Heart right ventricle (tissue), 16 donors: ENCODE measurements at regions of chr9 and their contacts with region 1.

Region 1: GRCh38 chr9:129413537-129414376 is 207.1 kb downstream of the C9orf50 start:
- DNase-seq: peak; percentile 99 to 100
- ATAC-seq: peak; percentile 85 to 92 (median 88)
- H3K4me3 ChIP-seq: peak overlapping the region; percentile 47 to 74 (median 61)
- H3K27ac ChIP-seq: peak overlapping the region; percentile 97 to 100 (median 100)
- H3K4me1 ChIP-seq: peaks cover 18 to 53% (median 31%) of the 10 kb centered on the region in 9 donors
- H3K27me3 ChIP-seq: no peaks in the 10 kb centered on the region
- CTCF ChIP-seq: no peak

Region 2: GRCh38 chr9:129164246-129164930 is 249.4 kb before region 1 on chr9:
- intact Hi-C with region 1: no loop called
- DNase-seq: peak; percentile 28 to 50
- ATAC-seq: peak; percentile 18 to 73 (median 48)
- H3K4me3 ChIP-seq: no peak overlapping the region
- H3K27ac ChIP-seq: peak overlapping the region; percentile 14 to 87 (median 72)
- H3K4me1 ChIP-seq: peaks cover 11 to 48% (median 24%) of the 10 kb centered on the region in 9 donors
- H3K27me3 ChIP-seq: no peaks in the 10 kb centered on the region
- CTCF ChIP-seq: no peak

Region 3: GRCh38 chr9:129312251-129313122 is 101.3 kb before region 1 on chr9:
- intact Hi-C with region 1: no loop called
- DNase-seq: no peak
- ATAC-seq: no peak
- H3K4me3 ChIP-seq: no peak overlapping the region
- H3K27ac ChIP-seq: no peak overlapping the region
- H3K4me1 ChIP-seq: peaks cover 0 to 28% (median 11%) of the 10 kb centered on the region in 9 donors
- H3K27me3 ChIP-seq: no peaks in the 10 kb centered on the region
- CTCF ChIP-seq: no peak

Region 4: DNA sequence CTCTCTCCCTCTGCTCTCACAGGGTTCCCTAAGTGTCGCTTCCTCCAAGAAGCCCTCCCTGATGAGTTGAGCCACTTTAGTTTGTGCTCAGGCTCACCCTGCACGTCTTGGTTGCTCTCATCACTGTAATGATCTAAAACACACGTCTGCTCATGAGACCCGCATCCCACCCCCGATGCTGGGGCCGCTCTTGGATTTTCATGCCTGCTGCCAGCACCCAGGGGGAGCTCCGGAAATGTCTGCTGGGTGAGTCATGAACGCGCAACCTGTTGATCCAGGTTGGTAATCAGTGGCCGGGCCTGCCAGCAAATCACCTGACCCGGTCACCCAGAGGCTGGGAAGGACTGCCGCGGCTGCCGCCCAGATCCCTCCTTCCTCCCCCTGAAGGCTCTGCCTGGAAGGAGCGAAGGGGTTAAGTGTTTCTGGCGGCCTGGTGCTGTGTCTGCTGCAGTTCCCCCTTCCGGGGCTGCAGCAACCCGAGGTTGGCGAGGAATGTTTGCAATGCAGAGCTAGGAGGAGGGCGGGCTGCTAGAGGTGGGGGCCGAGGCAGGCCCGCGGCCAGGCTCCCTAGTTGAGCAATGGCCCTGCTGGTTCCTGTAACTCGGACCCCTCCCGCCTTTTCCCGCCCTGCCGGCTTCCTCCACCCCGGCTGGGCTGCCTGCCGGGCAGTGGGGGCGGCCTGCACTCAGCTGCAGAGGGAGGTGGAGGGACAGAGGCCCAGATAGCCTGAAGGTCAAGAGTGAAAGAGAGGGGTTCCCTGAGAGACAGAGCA is 79.6 kb before region 1 on chr9:
- intact Hi-C with region 1: loop called in 2 of 10 experiments (anchors 5 to 10 kb)
- DNase-seq: peak; percentile 88 to 89
- ATAC-seq: peak; percentile 87 to 95 (median 91)
- H3K4me3 ChIP-seq: peak overlapping the region in 8 of 10 donors; percentile 2 to 39 (median 29)
- H3K27ac ChIP-seq: peak overlapping the region; percentile 69 to 96 (median 88)
- H3K4me1 ChIP-seq: peaks cover 19 to 60% (median 53%) of the 10 kb centered on the region in 9 donors
- H3K27me3 ChIP-seq: no peaks in the 10 kb centered on the region
- CTCF ChIP-seq: peak in 4 of 9 donors; percentile 7 to 22 (median 11)

Region 5: GRCh38 chr9:129460323-129461261 is 46.8 kb after region 1 on chr9:
- intact Hi-C with region 1: loop called in 5 of 10 experiments (anchors 1 to 5 kb)
- DNase-seq: peak; percentile 95 to 98
- ATAC-seq: peak; percentile 88 to 95 (median 91)
- H3K4me3 ChIP-seq: peak overlapping the region in 9 of 10 donors; percentile 30 to 57 (median 50)
- H3K27ac ChIP-seq: peak overlapping the region; percentile 86 to 100 (median 98)
- H3K4me1 ChIP-seq: peaks cover 28 to 52% (median 46%) of the 10 kb centered on the region in 9 donors
- H3K27me3 ChIP-seq: no peaks in the 10 kb centered on the region
- CTCF ChIP-seq: peak in 5 of 9 donors; percentile 11 to 59 (median 31)

Region 6: GRCh38 chr9:129473523-129474229 is 59.9 kb after region 1 on chr9:
- intact Hi-C with region 1: loop called in 1 of 10 experiments (anchors 10 kb)
- DNase-seq: peak; percentile 29 to 37
- ATAC-seq: peak; percentile 39 to 77 (median 62)
- H3K4me3 ChIP-seq: no peak overlapping the region
- H3K27ac ChIP-seq: peak overlapping the region in 3 of 10 donors; percentile 12 to 34 (median 20)
- H3K4me1 ChIP-seq: peaks cover 5 to 32% (median 12%) of the 10 kb centered on the region in 9 donors
- H3K27me3 ChIP-seq: no peaks in the 10 kb centered on the region
- CTCF ChIP-seq: no peak

Region 7: DNA sequence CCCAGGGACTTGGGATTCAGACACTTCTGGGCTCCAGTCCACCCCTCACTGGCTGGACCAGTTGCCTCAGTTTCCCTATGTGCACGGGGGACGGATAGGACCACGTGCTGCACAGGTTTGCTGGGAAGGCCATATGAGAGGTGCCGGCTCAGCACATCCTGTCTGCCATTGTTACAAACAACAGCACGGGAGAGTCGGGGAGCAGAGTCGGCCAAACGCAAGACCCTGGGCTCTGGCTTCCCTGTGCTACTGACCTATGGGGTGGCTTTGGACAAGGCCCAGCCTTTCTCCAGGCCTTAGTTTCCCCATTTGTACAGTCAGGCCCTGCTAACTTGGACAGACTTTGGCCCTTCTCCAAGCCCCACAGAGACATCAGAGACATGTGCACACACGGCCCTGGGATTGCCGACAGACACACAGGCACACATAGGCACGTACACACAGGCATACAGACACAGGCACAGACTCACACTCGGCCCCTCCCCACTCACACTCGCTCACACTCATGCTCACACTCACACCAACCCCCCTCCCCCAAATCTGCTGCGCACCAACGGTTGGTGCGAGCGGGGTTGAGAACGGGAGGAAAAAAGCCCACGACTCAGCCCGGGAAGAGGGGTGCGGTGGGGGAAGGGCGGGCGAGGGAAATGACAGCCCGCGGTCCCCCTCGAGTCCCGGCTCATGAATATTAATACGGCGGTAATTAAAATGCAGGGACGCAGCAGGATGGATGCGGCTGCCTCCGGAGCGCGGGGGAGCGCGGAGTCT is 74.1 kb after region 1 on chr9:
- intact Hi-C with region 1: loop called in 7 of 10 experiments (anchors 2 to 5 kb)
- DNase-seq: peak; percentile 53 to 65
- ATAC-seq: peak in 5 of 8 donors; percentile 0 to 12 (median 5)
- H3K4me3 ChIP-seq: peak overlapping the region; percentile 44 to 61 (median 56)
- H3K27ac ChIP-seq: peak overlapping the region; percentile 96 to 100 (median 99)
- H3K4me1 ChIP-seq: peaks cover 33 to 94% (median 70%) of the 10 kb centered on the region in 9 donors
- H3K27me3 ChIP-seq: no peaks in the 10 kb centered on the region
- CTCF ChIP-seq: no peak